ENCODE measurements at regions of chrX and their contacts with region 1.

Region 1: DNA sequence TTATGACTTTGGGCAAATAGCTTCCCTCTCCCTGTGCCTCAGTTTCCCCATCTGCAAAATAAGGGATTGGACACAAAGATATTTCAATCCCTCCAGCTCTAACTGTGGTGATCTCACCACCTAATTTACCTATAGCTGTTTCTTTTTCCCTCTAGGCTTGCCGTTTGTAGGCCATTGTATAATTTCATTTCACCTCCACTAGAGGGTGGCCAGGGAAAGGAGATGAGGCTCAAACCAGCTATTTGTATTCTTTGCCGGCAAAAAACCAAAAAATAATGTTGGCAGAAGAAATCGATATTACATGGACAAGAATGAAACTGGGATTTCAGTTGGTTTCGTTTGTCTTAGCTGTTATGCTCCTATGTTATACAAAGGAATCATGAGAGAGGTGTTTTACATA is 36.1 kb upstream of the DOCK11 start:
- DNase-seq: peak; percentile 32
- H3K4me3 Mint-ChIP-seq: no peak overlapping the region
- H3K27ac Mint-ChIP-seq: no peak overlapping the region
- H3K4me1 Mint-ChIP-seq: no peaks in the 10 kb centered on the region
- H3K27me3 Mint-ChIP-seq: no peaks in the 10 kb centered on the region
- CTCF ChIP-seq: peak; percentile 30

Region 2: DNA sequence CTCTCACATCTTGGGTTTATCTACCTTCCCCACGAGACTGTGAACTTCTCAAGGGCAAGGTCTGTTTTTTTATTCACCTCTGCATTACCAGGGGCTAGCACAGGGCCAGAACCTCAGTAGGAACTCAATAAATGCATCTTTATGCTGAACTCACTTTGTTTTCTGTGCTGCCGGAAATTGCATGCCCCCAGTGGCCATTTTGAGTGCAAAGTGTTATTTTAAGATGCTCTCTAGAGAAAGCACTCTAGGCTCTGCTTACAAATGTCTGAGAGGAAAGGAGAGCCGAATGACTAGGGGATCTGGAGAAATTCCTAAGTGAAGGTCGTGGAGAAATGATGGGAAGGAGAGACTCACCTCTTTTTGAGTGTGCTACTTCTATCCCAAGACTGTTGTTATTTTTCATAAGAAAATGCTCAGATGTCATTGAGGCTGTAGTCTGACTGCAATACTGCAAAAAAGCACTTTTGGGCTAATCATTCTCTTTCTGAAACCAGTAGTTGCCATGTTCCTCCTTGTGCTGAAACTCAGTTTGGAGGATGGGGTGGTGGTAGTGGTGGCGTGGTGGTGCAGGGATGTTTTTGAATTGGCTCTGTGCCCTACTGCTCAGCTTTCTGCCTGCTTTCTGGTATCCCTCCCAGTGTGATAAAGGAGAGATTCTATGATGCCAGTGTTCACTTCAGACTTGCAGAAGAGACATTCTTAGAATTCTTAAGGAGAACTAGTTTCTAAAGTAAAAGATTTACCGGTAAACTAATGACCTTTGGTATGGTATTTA is 77.4 kb after region 1 on chrX:
- CTCF ChIA-PET with region 1: no interaction called
- intact Hi-C with region 1: loop called (anchors 5 kb)
- DNase-seq: peak; percentile 13
- H3K4me3 Mint-ChIP-seq: no peak overlapping the region
- H3K27ac Mint-ChIP-seq: no peak overlapping the region
- H3K4me1 Mint-ChIP-seq: peaks cover 9% of the 10 kb centered on the region
- H3K27me3 Mint-ChIP-seq: no peaks in the 10 kb centered on the region
- CTCF ChIP-seq: no peak

Region 3: DNA sequence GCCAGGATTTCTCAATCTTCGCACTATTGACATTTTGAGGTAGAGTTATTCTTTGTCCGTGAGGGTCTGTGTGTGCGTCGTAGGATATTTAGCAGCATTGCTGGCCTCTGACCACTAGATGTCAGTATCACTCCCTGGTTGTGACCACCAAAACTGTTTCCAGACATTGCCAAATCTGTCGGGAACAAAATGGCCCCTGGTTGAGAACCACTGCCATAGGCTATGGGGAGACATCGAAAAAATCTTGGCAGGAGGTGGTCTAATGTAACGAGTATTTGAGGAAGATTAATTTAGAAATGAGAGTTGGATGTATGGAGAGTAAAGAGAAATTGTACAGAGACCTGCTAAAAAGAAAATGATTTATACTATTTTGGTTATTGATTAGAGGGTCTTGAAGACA is 144.5 kb after region 1 on chrX:
- CTCF ChIA-PET with region 1: interaction called, 48 read pairs
- intact Hi-C with region 1: loop called (anchors 1 kb)
- DNase-seq: peak; percentile 50
- H3K4me3 Mint-ChIP-seq: peak overlapping the region; percentile 28
- H3K27ac Mint-ChIP-seq: peak overlapping the region; percentile 27
- H3K4me1 Mint-ChIP-seq: peaks cover 8% of the 10 kb centered on the region
- H3K27me3 Mint-ChIP-seq: no peaks in the 10 kb centered on the region
- CTCF ChIP-seq: peak; percentile 37